ENCODE measurements at regions of chr7 and their contacts with region 1.

Region 1: DNA sequence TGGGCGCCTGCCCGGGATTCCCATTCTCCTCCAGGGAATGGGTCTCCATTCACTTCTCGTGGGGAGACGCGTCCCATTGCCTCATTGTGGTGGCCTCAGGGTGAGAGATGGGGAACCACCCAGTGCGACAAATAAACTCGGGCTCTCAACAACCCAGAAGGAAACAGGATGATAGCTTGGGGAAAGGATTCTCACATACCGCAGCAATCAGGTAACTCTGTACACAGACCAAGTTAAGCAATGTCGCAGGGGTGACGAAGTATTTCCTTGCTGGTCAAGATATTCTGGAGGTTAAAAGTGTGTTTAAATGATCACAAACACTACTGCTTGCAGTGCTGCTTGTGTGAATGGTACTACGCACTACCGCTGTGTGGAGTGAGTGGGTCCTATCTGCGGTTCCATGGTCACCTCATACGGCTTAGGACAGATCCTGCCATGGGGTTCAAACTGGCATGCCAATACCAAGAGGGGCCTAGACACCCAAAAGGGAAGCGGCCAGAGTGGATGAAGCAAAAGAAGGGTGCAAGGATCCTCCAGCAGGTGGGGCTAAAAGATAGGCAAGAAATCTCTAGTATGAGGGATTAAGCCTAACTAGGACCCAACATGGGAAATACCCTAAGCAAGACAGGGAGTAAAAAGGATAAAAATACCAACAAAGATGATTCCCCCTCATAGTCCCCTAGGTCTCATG is 143.8 kb upstream of the TMEM106B start:
- DNase-seq: peak; percentile 72
- ATAC-seq: peak; percentile 77
- H3K4me3 Mint-ChIP-seq: no peak overlapping the region
- H3K27ac Mint-ChIP-seq: no peak overlapping the region
- H3K4me1 Mint-ChIP-seq: no peaks in the 10 kb centered on the region
- H3K27me3 Mint-ChIP-seq: peaks cover 2% of the 10 kb centered on the region

Region 2: DNA sequence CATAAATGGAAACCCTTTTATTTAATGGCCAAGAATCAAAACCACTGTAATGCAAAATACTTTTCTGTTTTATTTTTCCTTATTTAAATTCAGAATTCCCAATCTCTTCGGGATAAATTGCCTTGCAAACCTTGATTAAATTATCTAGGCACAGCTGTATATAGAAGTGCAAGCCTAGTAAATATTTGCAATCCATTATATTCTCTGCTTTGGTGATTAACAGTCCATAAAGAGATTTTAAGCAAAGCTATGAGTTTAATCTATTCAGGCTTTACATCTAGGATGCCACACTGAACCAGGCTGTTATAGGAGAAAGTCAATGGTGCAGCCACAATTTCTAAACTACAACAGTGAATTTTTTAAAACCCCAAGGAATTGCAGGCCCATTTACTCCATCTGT is 191.7 kb before region 1 on chr7:
- CTCF ChIA-PET with region 1: no interaction called
- POLR2A ChIA-PET with region 1: no interaction called
- DNase-seq: no peak
- ATAC-seq: no peak
- H3K4me3 Mint-ChIP-seq: no peak overlapping the region
- H3K27ac Mint-ChIP-seq: no peak overlapping the region
- H3K4me1 Mint-ChIP-seq: peaks cover 3% of the 10 kb centered on the region
- H3K27me3 Mint-ChIP-seq: no peaks in the 10 kb centered on the region

Region 3: GRCh38 chr7:11935905-11936304 is 131.4 kb before region 1 on chr7:
- CTCF ChIA-PET with region 1: no interaction called
- POLR2A ChIA-PET with region 1: no interaction called
- DNase-seq: no peak
- ATAC-seq: no peak
- H3K4me3 Mint-ChIP-seq: no peak overlapping the region
- H3K27ac Mint-ChIP-seq: no peak overlapping the region
- H3K4me1 Mint-ChIP-seq: no peaks in the 10 kb centered on the region
- H3K27me3 Mint-ChIP-seq: no peaks in the 10 kb centered on the region

Region 4: GRCh38 chr7:12322284-12322902 is 255.1 kb after region 1 on chr7:
- CTCF ChIA-PET with region 1: interaction called, 14 read pairs
- POLR2A ChIA-PET with region 1: no interaction called
- DNase-seq: peak; percentile 39
- ATAC-seq: no peak
- H3K4me3 Mint-ChIP-seq: no peak overlapping the region
- H3K27ac Mint-ChIP-seq: no peak overlapping the region
- H3K4me1 Mint-ChIP-seq: peaks cover 14% of the 10 kb centered on the region
- H3K27me3 Mint-ChIP-seq: peaks cover 2% of the 10 kb centered on the region

Measured in activated CD8-positive, alpha-beta T cell treated with anti-CD3 and anti-CD28 coated beads, Interleukin-2, amount 10 ng/mL, durations not matched to agents 7 days and 5 days (primary cell).